ENCODE measurements at regions of chr13 and their contacts with region 1.

Region 1: GRCh38 chr13:19618925-19619324 is 14.5 kb upstream of the MPHOSPH8 start:
- DNase-seq: peak; percentile 37
- ATAC-seq: peak; percentile 93
- H3K4me3 ChIP-seq: no peak overlapping the region
- H3K27ac ChIP-seq: no peak overlapping the region
- H3K4me1 ChIP-seq: no peaks in the 10 kb centered on the region
- H3K27me3 ChIP-seq: no peaks in the 10 kb centered on the region
- CTCF ChIP-seq: peak; percentile 60
- POLR2A ChIP-seq: no peak
- RAD21 ChIP-seq: peak; percentile 67

Region 2: DNA sequence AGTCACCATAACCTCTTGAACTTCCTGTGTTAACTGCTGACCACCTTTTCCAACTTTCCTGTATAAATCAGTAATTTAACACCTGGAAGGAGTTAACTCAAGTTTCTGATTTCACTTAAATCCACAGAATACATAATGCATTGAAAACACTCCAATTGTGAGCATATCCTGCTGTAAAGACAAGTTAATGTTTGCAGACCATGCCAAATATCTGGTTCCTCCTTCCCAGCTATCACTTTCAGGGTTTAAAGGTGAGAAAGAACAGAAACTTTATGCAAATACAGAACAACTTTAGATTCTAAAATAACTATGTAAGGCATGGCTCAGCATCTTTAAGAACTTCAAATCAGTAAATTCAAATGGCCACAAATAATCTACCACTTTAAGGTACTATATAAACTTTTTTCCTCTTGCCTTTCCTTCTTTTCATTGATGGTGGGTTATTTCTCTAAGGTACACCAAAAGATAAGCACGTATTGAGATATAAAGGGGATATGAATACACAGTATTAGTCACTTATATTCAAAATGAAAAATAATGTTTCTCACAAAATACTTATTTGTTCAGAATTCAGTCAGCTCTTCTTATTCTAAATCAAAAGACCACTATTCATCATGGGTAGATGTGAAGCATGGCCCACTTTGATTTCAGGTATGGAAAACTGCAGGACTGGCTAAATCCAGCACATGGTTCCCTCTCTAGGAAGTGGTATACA is 50.9 kb before region 1 on chr13:
- CTCF ChIA-PET with region 1: no interaction called
- POLR2A ChIA-PET with region 1: no interaction called
- dilution Hi-C with region 1: no loop called
- in situ Hi-C with region 1: loop called (anchors 10 kb)
- intact Hi-C with region 1: loop called (anchors 2 kb)
- DNase-seq: no peak
- ATAC-seq: no peak
- H3K4me3 ChIP-seq: no peak overlapping the region
- H3K27ac ChIP-seq: no peak overlapping the region
- H3K4me1 ChIP-seq: no peaks in the 10 kb centered on the region
- H3K27me3 ChIP-seq: no peaks in the 10 kb centered on the region
- CTCF ChIP-seq: no peak
- POLR2A ChIP-seq: no peak
- RAD21 ChIP-seq: no peak

Measured in IMR-90 (cell line).